ENCODE measurements at regions of chr4 and their contacts with region 1.

Region 1: GRCh38 chr4:147590249-147590920 is 26.8 kb upstream of the TMEM184C start:
- DNase-seq: peak; percentile 54
- CTCF ChIP-seq: peak; percentile 82

Region 2: DNA sequence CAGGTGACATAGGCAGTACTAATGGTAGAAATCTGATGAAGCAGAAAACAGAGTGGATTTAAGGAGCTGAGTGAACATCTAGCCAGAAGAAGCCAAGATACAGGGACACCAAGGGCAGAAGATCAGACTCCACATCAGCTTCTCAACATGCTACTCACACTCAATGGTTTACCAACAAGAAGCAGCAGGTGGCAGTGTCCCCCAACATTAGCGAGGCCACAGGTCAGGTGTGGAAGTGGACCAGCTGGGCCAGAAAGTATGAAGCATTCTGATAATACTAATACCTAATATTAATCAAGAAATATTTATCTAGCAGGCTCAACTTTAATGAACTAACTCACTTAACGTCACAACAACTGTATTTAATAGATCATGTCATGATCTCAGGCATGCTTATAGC is 571.3 kb before region 1 on chr4:
- CTCF ChIA-PET with region 1: interaction called, 20 read pairs
- POLR2A ChIA-PET with region 1: no interaction called
- DNase-seq: peak; percentile 29
- CTCF ChIP-seq: peak; percentile 64

Region 3: GRCh38 chr4:147160908-147161513 is 429.4 kb before region 1 on chr4:
- CTCF ChIA-PET with region 1: interaction called, 28 read pairs
- POLR2A ChIA-PET with region 1: no interaction called
- DNase-seq: peak; percentile 64
- CTCF ChIP-seq: peak; percentile 85

Region 4: DNA sequence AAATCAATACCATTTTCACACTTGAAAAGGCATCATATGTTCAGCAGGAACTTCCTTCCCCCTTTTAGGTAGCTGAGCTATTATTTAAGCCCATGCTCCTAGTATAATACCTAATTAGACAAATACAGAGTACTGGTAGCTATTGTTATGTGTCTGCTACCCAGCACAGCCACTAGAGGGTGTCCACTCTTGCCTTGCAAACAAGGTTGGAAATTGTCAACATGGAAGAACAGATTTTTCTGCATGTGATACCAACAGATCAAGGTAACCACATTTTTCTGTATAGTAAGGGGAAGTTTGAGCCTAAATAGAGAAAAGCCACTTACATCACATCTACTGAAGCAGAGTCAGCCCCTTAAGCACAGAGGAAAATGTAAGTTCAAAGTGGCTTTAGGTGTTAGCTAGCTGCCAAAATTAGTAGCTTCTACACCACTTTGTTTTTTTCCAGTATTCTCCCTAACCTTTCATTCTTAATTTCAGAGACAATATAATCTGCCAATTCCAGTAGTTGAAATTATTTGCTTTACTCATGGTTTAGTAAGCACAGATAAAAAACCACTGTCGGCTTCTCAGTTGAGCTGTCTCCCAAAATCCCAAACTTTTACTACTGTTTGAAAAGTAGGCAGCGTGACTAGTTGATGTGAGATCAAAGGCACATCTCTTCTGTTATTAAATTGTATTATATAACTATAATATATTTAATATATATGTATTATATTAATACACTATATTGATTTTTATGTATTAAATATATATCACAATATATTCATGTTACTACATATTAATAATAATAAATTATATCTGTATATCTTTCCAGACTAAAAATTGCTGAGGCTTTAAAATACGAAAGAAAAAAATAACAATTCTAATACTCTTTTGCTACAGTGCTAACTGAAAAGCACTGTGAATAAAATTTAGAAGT is 71.3 kb before region 1 on chr4:
- CTCF ChIA-PET with region 1: interaction called, 91 read pairs
- POLR2A ChIA-PET with region 1: no interaction called
- DNase-seq: peak; percentile 40
- CTCF ChIP-seq: peak; percentile 86

Region 5: DNA sequence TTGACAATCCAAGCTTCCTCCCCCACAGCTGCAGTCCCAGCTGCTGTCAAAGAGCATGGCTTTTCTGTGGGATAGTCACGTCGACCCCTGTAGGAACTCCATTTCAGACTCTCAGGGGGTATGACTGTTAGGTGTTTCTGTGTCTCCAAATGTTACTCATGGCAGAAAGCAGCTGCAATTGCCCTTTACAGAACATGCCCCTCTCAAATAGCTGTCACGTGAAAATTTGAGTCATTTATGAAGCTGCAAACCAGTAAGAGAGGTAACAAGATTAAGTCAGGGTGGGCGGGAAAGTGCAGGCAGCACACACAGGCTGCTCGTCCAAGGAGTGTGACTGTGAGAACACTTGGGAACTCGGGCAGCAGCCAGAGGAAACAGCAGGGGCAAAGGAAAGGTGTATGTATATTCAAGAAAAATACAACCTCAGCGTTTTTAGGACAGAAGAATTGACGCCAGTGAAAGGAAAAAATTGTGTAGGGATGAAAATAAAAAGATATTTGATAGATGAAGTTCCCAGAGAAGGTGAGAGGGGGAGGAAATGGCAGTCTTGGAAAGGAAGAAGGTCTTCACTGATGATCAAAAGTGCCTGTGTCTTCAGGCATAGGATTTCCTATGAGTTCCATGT is 39.6 kb before region 1 on chr4:
- CTCF ChIA-PET with region 1: interaction called, 17 read pairs
- POLR2A ChIA-PET with region 1: no interaction called
- DNase-seq: peak; percentile 37
- CTCF ChIP-seq: no peak

Region 6: GRCh38 chr4:147578051-147578476 is 12.3 kb before region 1 on chr4:
- CTCF ChIA-PET with region 1: interaction called, 10 read pairs
- POLR2A ChIA-PET with region 1: no interaction called
- DNase-seq: no peak
- CTCF ChIP-seq: no peak

Region 7: GRCh38 chr4:147617173-147617840 is 26.9 kb after region 1 on chr4 and contains the start of gene TMEM184C:
- CTCF ChIA-PET with region 1: interaction called, 12 read pairs
- POLR2A ChIA-PET with region 1: interaction called, 3 read pairs
- DNase-seq: peak; percentile 93
- CTCF ChIP-seq: no peak

Region 8: GRCh38 chr4:147651563-147651962 is 61.2 kb after region 1 on chr4:
- CTCF ChIA-PET with region 1: no interaction called
- POLR2A ChIA-PET with region 1: no interaction called
- DNase-seq: no peak
- CTCF ChIP-seq: no peak

Measured in GM10248 (cell line).